Common myeloid progenitor, CD34-positive (primary cell): ENCODE measurements at regions of chr7 and their contacts with region 1.

Region 1: GRCh38 chr7:23419845-23420244 is 50.4 kb downstream of the IGF2BP3 start:
- DNase-seq: no peak
- H3K4me3 ChIP-seq: no peak overlapping the region
- H3K27ac ChIP-seq: no peak overlapping the region
- H3K4me1 ChIP-seq: peaks cover 0 to 15% (median 0%) of the 10 kb centered on the region in 4 experiments
- H3K27me3 ChIP-seq: no peaks in the 10 kb centered on the region

Region 2: DNA sequence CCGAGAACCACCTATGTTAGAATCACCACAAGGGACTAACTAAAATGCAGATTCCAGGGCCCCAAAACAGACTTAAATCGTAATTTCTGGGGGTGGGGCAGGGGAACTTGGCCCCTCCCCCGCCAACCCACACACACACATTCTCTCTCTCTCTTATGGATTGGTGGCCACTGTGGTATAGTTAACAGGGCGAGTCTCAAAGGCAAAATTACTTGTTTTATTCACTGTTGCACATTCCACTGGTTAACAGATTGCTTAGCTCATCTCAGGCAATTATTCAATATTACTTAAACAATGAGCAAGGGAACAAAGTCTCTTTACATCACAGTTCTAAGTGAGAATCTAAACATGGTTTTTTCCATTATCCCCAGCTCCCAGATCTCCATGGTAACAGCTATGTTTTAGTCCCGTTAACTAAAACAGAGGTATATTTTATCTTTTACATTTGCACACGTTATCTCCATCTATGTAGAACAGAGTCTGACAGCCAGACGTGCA is 11.9 kb after region 1 on chr7:
- CTCF ChIA-PET with region 1: interaction called, 16 read pairs
- POLR2A ChIA-PET with region 1: interaction called, 3 read pairs
- DNase-seq: no peak
- H3K4me3 ChIP-seq: no peak overlapping the region
- H3K27ac ChIP-seq: no peak overlapping the region
- H3K4me1 ChIP-seq: peaks cover 0 to 29% (median 5%) of the 10 kb centered on the region in 4 experiments
- H3K27me3 ChIP-seq: peaks cover 0 to 7% (median 3%) of the 10 kb centered on the region in 5 experiments

Region 3: DNA sequence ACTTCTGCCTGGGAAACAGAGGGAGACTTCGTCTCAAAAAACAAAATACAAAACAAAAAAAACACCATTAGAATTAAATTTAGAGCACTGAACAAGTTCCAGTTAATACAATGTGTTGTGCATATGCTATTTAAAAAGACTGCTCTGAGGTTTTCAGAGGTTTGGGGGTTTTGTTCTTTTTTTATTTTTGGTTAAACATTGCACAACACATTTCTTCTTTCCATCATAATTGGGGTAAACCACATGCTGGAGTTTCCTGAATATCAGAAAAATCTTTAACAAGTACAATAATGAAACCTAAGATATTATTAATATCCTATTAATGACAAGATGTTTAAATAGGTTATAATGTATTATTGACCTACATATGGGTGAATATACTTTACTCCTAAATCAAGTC is 24.1 kb after region 1 on chr7:
- CTCF ChIA-PET with region 1: no interaction called
- POLR2A ChIA-PET with region 1: no interaction called
- DNase-seq: peak in 1 of 3 donors; percentile 44
- H3K4me3 ChIP-seq: no peak overlapping the region
- H3K27ac ChIP-seq: no peak overlapping the region
- H3K4me1 ChIP-seq: peaks cover 0 to 24% (median 0%) of the 10 kb centered on the region in 4 experiments
- H3K27me3 ChIP-seq: no peaks in the 10 kb centered on the region

Region 4: GRCh38 chr7:23520582-23520981 is 100.7 kb after region 1 on chr7:
- CTCF ChIA-PET with region 1: no interaction called
- POLR2A ChIA-PET with region 1: no interaction called
- DNase-seq: no peak
- H3K4me3 ChIP-seq: no peak overlapping the region
- H3K27ac ChIP-seq: no peak overlapping the region
- H3K4me1 ChIP-seq: peaks cover 0 to 5% (median 2%) of the 10 kb centered on the region in 4 experiments
- H3K27me3 ChIP-seq: no peaks in the 10 kb centered on the region

Region 5: DNA sequence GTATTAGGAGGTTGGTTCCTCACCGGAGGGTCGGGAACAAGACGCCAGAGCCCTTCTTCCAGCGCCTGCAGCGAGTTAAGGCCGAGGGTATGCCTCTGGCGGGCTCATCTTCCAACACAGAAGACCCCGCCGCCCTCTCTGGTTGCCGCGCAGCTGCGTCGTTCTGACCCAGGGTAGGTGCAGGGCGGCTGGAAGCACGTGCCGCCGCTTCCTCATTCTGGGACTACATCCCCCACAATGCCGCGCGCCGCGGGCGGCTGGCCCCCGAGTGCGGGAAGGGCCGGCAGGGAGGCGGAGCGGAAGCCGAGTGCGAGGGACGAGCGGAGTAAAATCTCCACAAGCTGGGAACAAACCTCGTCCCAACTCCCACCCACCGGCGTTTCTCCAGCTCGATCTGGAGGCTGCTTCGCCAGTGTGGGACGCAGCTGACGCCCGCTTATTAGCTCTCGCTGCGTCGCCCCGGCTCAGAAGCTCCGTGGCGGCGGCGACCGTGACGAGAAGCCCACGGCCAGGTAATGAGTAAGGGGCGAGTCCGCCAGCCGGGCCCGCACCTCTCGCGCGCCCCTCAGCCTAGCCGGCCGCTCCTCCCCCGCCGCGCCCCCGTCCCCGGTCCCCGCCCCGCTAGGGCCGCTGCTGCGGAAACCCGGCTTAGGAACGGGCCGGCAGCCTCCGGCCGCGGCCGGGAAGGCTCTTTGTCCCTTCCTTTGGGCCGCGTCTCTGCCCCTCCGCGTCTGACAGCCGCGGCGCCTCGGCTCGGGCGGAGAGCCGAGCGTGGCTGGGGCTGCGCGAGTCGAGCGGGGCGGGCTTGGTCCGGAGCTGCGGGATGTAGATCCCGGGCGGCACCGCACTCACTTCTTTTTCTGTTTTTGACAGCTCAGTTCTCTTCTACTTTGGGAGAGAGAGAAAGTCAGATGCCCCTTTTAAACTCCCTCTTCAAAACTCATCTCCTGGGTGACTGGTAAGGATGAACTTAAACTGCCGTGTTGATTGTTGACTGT is 177.5 kb after region 1 on chr7 and contains the start of gene CCDC126:
- CTCF ChIA-PET with region 1: no interaction called
- POLR2A ChIA-PET with region 1: no interaction called
- DNase-seq: peak; percentile 81 to 87 (median 81)
- H3K4me3 ChIP-seq: peak within 1 kb of the TSS; percentile 84 to 92 (median 90)
- H3K27ac ChIP-seq: peak within 1 kb of the TSS in 1 of 2 experiments; percentile 67
- H3K4me1 ChIP-seq: peaks cover 12 to 19% (median 14%) of the 10 kb centered on the region in 4 experiments
- H3K27me3 ChIP-seq: no peaks in the 10 kb centered on the region